A673 (cell line): ENCODE measurements at regions of chr3 and their contacts with region 1.

Region 1: GRCh38 chr3:118817748-118818165 is 216.9 kb downstream of the IGSF11 start:
- DNase-seq: peak; percentile 68
- H3K4me3 ChIP-seq: no peak overlapping the region
- H3K27ac ChIP-seq: no peak overlapping the region
- H3K4me1 ChIP-seq: no peaks in the 10 kb centered on the region
- H3K27me3 ChIP-seq: no peaks in the 10 kb centered on the region
- CTCF ChIP-seq: peak; percentile 88

Region 2: GRCh38 chr3:118636841-118637240 is 180.9 kb before region 1 on chr3:
- CTCF ChIA-PET with region 1: no interaction called
- POLR2A ChIA-PET with region 1: no interaction called
- intact Hi-C with region 1: loop called (anchors 10 kb)
- DNase-seq: peak; percentile 11
- H3K4me3 ChIP-seq: no peak overlapping the region
- H3K27ac ChIP-seq: no peak overlapping the region
- H3K4me1 ChIP-seq: no peaks in the 10 kb centered on the region
- H3K27me3 ChIP-seq: peaks cover 5% of the 10 kb centered on the region
- CTCF ChIP-seq: peak; percentile 35; the same call in 1 of the 2 replicates

Region 3: DNA sequence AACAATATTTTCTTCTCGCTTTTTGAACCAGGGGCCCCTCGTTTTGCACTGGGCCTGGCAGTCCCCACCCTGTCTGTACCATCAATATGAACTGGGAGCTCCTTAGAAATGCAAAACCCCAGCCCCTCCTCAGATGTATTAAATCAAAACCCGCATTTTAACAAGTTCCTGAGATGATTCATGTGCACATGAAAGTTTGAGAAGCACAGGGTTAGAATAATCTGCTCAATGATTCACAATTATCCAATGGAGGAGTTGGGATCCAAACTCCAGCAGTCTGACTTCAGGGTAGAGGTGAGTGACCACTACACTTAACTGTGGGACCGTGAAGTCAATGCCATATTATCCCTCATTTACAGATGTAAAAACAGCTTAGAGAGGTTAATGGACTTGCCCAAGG is 39.6 kb before region 1 on chr3:
- CTCF ChIA-PET with region 1: no interaction called
- POLR2A ChIA-PET with region 1: no interaction called
- intact Hi-C with region 1: no loop called
- DNase-seq: no peak
- H3K4me3 ChIP-seq: no peak overlapping the region
- H3K27ac ChIP-seq: no peak overlapping the region
- H3K4me1 ChIP-seq: no peaks in the 10 kb centered on the region
- H3K27me3 ChIP-seq: no peaks in the 10 kb centered on the region
- CTCF ChIP-seq: no peak

Region 4: GRCh38 chr3:119524931-119525662 is 707.3 kb after region 1 on chr3:
- CTCF ChIA-PET with region 1: no interaction called
- POLR2A ChIA-PET with region 1: no interaction called
- intact Hi-C with region 1: no loop called
- DNase-seq: no peak
- H3K4me3 ChIP-seq: no peak overlapping the region
- H3K27ac ChIP-seq: no peak overlapping the region
- H3K4me1 ChIP-seq: no peaks in the 10 kb centered on the region
- H3K27me3 ChIP-seq: no peaks in the 10 kb centered on the region
- CTCF ChIP-seq: peak; percentile 34; the same call in 1 of the 2 replicates